Caco-2 (cell line): ENCODE measurements at regions of chr1 and their contacts with region 1.

Region 1: DNA sequence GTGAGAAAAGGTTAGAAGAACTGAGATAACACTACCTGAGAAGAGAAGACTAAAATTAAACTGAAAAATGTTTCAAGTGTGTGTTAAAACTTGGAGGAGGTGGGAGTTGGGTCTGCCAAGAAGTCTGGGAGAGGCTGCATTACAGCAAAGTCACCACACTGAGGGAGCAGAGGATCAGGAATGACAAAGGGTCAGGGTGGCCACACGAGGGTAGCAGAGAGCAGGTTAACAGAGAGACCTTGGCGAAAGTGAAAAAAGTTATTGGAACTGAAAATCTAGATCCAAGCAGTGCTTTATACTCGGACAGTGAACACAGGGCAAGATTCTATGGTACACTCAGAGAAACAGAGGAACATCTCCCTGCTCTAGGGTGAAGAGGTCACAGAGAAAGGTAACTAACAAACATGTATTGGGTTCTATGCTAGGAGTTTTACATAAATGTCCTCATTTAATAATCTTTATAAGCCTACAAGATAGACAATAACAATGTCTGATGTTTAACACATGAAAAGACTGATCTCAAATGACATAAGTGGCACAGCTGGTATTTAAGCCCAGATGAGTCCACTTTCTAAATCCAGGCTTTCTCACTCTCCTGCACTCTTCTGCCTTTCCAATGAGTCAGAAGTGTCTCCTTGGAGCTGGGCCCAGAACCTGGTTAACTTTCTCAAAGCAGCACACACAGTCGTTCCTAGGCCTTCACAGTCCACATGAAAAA is 10.3 kb upstream of the CADM3 start:
- DNase-seq: peak; percentile 74 to 82
- H3K4me3 ChIP-seq: no peak overlapping the region
- H3K4me3 Mint-ChIP-seq: no peak overlapping the region
- H3K27ac Mint-ChIP-seq: no peak overlapping the region
- H3K4me1 ChIP-seq: no peaks in the 10 kb centered on the region
- H3K4me1 Mint-ChIP-seq: no peaks in the 10 kb centered on the region
- H3K27me3 ChIP-seq: no peaks in the 10 kb centered on the region
- H3K27me3 Mint-ChIP-seq: peaks cover 20% of the 10 kb centered on the region
- CTCF ChIP-seq: peak; percentile 97 to 99

Region 2: DNA sequence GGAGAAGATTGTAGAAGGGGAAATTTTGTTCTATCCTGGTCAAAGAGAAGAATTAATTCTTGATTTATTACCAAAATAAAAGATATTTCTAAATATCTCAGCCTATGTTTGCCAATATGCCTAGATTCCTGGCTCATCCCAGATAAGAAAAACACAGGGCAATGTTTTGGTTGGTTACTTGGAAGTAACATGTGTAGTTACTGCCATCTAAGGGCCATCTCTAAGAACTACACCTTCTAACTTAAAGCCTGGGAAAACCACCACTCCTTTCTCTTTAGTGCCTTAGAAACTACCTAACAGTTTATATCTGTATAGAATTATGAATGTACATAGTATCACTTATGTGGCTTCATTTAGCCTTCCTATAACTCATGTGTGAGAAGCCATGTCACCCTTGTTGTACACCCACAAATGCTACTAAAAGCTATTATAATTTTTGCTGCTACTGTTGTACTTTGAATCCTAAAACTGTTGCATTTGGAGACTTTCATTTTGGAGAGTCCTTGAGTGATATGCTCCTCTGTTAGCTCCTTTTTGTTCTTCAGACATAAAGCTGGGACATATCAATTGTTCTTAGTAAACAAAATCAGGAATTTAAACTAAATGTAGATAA is 89.1 kb before region 1 on chr1:
- CTCF ChIA-PET with region 1: no interaction called
- POLR2A ChIA-PET with region 1: no interaction called
- intact Hi-C with region 1: no loop called
- DNase-seq: peak in 1 of 2 experiments; percentile 47
- H3K4me3 ChIP-seq: no peak overlapping the region
- H3K4me3 Mint-ChIP-seq: no peak overlapping the region
- H3K27ac Mint-ChIP-seq: no peak overlapping the region
- H3K4me1 ChIP-seq: no peaks in the 10 kb centered on the region
- H3K4me1 Mint-ChIP-seq: no peaks in the 10 kb centered on the region
- H3K27me3 ChIP-seq: no peaks in the 10 kb centered on the region
- H3K27me3 Mint-ChIP-seq: peaks cover 2% of the 10 kb centered on the region
- CTCF ChIP-seq: peak; percentile 46 to 53

Region 3: GRCh38 chr1:159197561-159198557 is 36.7 kb after region 1 on chr1:
- CTCF ChIA-PET with region 1: interaction called, 5 read pairs
- POLR2A ChIA-PET with region 1: no interaction called
- intact Hi-C with region 1: loop called (anchors 1 kb)
- DNase-seq: peak; percentile 74 to 77
- H3K4me3 ChIP-seq: no peak overlapping the region
- H3K4me3 Mint-ChIP-seq: no peak overlapping the region
- H3K27ac Mint-ChIP-seq: no peak overlapping the region
- H3K4me1 ChIP-seq: no peaks in the 10 kb centered on the region
- H3K4me1 Mint-ChIP-seq: no peaks in the 10 kb centered on the region
- H3K27me3 ChIP-seq: peaks cover 1% of the 10 kb centered on the region; the same call in 1 of the 2 replicates
- H3K27me3 Mint-ChIP-seq: peaks cover 30% of the 10 kb centered on the region
- CTCF ChIP-seq: peak; percentile 68 to 89

Region 4: DNA sequence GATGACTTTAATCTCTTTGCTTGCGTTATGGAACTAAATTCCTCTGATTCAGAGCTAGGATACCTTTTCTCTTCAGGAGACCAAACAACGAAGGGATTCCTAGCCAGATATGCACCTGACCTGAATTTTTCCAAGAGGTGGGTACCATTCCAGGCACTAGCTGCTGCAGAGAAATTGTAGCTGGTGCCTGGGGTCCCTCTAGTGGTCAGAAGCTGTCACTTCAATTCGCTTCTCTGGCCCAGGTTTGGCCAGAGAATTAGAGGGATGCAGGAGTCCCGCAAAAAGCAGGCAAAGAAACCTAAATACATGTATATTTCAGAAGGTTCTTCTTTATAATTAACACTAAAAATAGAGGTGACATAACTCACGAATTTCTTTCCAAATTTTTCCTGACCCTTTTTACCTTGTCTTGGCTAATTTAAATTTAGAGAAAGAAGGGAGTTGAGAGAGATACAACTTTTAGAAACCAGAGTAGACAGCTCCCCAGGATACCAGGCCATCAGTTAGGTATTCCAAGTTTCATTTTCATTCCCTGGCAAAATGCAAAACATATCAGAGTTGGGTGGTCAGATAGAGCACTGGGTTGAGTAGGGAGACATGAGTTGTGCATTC is 53.1 kb after region 1 on chr1:
- CTCF ChIA-PET with region 1: interaction called, 3 read pairs
- POLR2A ChIA-PET with region 1: no interaction called
- intact Hi-C with region 1: loop called (anchors 1 kb)
- DNase-seq: peak; percentile 47 to 65
- H3K4me3 ChIP-seq: no peak overlapping the region
- H3K4me3 Mint-ChIP-seq: no peak overlapping the region
- H3K27ac Mint-ChIP-seq: no peak overlapping the region
- H3K4me1 ChIP-seq: no peaks in the 10 kb centered on the region
- H3K4me1 Mint-ChIP-seq: peaks cover 10% of the 10 kb centered on the region
- H3K27me3 ChIP-seq: no peaks in the 10 kb centered on the region
- H3K27me3 Mint-ChIP-seq: peaks cover 9% of the 10 kb centered on the region
- CTCF ChIP-seq: peak; percentile 89

Region 5: DNA sequence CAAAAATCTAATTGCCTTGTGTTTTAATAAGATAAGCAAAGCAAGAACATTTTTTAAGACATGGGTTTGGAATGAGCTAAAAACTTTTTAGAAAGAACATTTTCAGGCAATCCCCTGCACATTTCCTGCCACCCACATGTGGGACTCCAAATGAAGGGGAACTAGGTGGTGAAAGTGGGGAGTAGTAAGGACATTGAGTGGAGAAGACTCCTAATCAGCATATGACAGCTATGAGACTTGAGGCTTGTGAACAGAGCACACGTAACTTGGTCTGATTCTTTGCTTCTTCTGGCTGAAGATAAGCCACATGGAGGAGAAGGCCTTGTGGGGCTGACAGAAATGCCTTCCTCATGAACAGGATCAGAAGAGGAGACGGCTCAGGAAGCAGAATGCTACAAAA is 191.3 kb after region 1 on chr1:
- CTCF ChIA-PET with region 1: no interaction called
- POLR2A ChIA-PET with region 1: no interaction called
- intact Hi-C with region 1: no loop called
- DNase-seq: no peak
- H3K4me3 ChIP-seq: no peak overlapping the region
- H3K4me3 Mint-ChIP-seq: no peak overlapping the region
- H3K27ac Mint-ChIP-seq: no peak overlapping the region
- H3K4me1 ChIP-seq: no peaks in the 10 kb centered on the region
- H3K4me1 Mint-ChIP-seq: no peaks in the 10 kb centered on the region
- H3K27me3 ChIP-seq: no peaks in the 10 kb centered on the region
- H3K27me3 Mint-ChIP-seq: peaks cover 8% of the 10 kb centered on the region
- CTCF ChIP-seq: no peak

Region 6: GRCh38 chr1:159790237-159790917 is 629.2 kb after region 1 on chr1:
- CTCF ChIA-PET with region 1: no interaction called
- POLR2A ChIA-PET with region 1: no interaction called
- intact Hi-C with region 1: loop called (anchors 5 kb)
- DNase-seq: peak; percentile 51 to 58
- H3K4me3 ChIP-seq: no peak overlapping the region
- H3K4me3 Mint-ChIP-seq: no peak overlapping the region
- H3K27ac Mint-ChIP-seq: no peak overlapping the region
- H3K4me1 ChIP-seq: peaks cover 20% of the 10 kb centered on the region
- H3K4me1 Mint-ChIP-seq: peaks cover 31% of the 10 kb centered on the region
- H3K27me3 ChIP-seq: no peaks in the 10 kb centered on the region
- H3K27me3 Mint-ChIP-seq: peaks cover 4% of the 10 kb centered on the region
- CTCF ChIP-seq: peak; percentile 59 to 65